GM23248 (cell line): ENCODE measurements at regions of chr9 and their contacts with region 1.

Region 1: GRCh38 chr9:4375424-4376200 is 75.7 kb upstream of the GLIS3 start:
- DNase-seq: peak; percentile 89
- H3K4me3 ChIP-seq: peak overlapping the region; percentile 45
- H3K27ac ChIP-seq: peak overlapping the region; percentile 79
- H3K4me1 ChIP-seq: peaks cover 28% of the 10 kb centered on the region
- H3K27me3 ChIP-seq: no peaks in the 10 kb centered on the region

Region 2: DNA sequence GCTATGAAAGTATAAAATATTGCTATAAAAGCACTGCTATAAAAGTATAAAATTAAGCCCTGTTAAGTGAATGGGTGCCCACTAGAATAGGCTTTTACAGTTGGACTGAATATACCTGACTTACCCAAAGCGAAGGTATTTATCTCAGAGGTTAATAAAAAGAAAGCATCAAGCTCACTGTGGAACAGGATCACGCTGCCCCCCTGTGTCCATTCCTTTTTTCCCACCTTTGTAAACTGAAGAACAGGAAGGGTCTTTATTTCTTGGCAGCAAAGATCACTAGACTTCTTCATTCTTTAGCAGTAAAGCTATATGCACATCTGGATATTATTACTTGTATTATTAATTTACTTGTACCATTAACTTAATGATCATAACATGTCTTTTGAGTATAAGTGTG is 264.4 kb after region 1 on chr9:
- in situ Hi-C with region 1: loop called (anchors 5 kb)
- DNase-seq: peak; percentile 46
- H3K4me3 ChIP-seq: no peak overlapping the region
- H3K27ac ChIP-seq: no peak overlapping the region
- H3K4me1 ChIP-seq: no peaks in the 10 kb centered on the region
- H3K27me3 ChIP-seq: no peaks in the 10 kb centered on the region